CD8-positive, alpha-beta T cell (primary cell): ENCODE measurements at regions of chr6 and their contacts with region 1.

Region 1: DNA sequence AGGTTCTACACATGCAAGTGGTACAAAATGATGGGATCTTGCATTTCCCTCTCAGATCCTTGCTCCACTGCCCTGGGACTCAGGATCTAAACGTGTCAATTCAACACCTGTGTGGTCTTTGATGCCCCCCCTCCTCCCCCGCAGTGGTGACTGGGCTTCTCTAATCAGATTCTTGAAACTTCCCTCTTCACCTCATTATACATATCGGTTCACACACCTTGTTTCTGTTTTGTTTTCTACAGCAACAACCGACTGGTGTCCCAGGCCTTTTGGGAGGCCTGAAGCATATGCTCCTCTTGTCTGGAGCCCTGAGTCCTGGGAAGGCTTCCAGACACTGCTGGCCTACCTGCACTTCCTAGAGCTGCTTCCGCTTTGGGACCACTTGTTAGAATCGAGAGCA is 20.0 kb downstream of the SAMD3 start:
- DNase-seq: peak in 4 of 9 experiments; percentile 30 to 55 (median 31)
- ATAC-seq: peak; percentile 62
- H3K4me3 ChIP-seq: no peak overlapping the region
- H3K4me3 Mint-ChIP-seq: peak overlapping the region; percentile 35
- H3K27ac ChIP-seq: peak overlapping the region; percentile 3 to 50
- H3K27ac Mint-ChIP-seq: peak overlapping the region; percentile 86
- H3K4me1 ChIP-seq: peaks cover 24% of the 10 kb centered on the region
- H3K4me1 Mint-ChIP-seq: peaks cover 74% of the 10 kb centered on the region
- H3K27me3 ChIP-seq: no peaks in the 10 kb centered on the region
- H3K27me3 Mint-ChIP-seq: no peaks in the 10 kb centered on the region
- CTCF ChIP-seq: no peak

Region 2: GRCh38 chr6:129818251-129818650 is 384.5 kb before region 1 on chr6:
- CTCF ChIA-PET with region 1: no interaction called
- POLR2A ChIA-PET with region 1: no interaction called
- intact Hi-C with region 1: no loop called
- DNase-seq: no peak
- ATAC-seq: no peak
- H3K4me3 ChIP-seq: no peak overlapping the region
- H3K4me3 Mint-ChIP-seq: no peak overlapping the region
- H3K27ac ChIP-seq: no peak overlapping the region
- H3K27ac Mint-ChIP-seq: no peak overlapping the region
- H3K4me1 ChIP-seq: no peaks in the 10 kb centered on the region
- H3K4me1 Mint-ChIP-seq: no peaks in the 10 kb centered on the region
- H3K27me3 ChIP-seq: no peaks in the 10 kb centered on the region
- H3K27me3 Mint-ChIP-seq: peaks cover 13% of the 10 kb centered on the region
- CTCF ChIP-seq: no peak

Region 3: DNA sequence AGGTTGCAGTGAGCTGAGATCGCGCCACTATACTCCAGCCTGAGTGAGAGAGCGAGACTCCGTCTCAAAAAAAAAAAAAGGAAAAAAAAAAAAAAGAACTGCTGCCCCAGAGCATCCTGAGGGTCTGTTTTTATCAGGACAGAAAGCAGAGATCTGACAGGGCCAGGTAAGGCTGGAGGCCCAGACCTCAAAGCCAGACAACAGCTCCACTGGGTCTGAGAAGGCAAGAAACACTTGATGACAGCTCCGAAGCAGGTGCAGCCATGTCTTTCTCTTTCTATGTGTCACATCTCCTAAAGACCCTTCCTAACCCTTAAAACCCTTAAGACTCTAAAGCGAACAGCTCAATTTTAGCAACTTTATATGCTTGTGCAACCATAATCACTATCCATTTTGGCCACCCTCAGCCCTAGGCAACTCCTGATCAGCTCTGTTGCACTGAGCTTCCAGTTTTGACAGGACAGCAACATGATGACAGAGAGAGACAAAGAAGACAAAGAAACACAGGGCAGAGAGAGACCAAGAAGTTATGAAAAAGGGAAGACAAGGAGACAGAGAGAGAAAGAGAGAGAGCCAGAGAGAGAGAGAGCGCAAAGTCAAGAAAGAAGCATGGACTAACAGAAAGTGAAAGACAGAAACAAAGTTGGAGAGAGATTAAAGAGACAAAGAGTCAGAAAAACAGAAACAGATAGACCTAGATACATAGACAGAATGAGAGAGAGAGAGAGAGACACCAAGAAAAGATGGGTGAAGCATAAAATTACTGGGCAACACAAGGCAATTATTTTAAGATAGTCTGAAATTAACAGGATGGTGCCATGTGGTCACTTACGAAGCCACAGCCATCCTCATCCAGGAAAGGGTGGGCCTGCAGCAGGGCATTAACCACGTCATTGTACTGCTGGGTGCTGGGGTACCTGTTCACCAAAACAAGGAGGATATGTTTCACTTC is 19.2 kb before region 1 on chr6:
- CTCF ChIA-PET with region 1: interaction called, 3 read pairs
- POLR2A ChIA-PET with region 1: interaction called, 3 read pairs
- intact Hi-C with region 1: loop called in 1 of 2 experiments (anchors 2 kb)
- DNase-seq: peak; percentile 6 to 86 (median 47)
- ATAC-seq: peak; percentile 92
- H3K4me3 ChIP-seq: peak overlapping the region; percentile 17 to 40
- H3K4me3 Mint-ChIP-seq: peak overlapping the region; percentile 59
- H3K27ac ChIP-seq: peak overlapping the region; percentile 67 to 82
- H3K27ac Mint-ChIP-seq: peak overlapping the region; percentile 91
- H3K4me1 ChIP-seq: peaks cover 41% of the 10 kb centered on the region
- H3K4me1 Mint-ChIP-seq: peaks cover 59% of the 10 kb centered on the region
- H3K27me3 ChIP-seq: no peaks in the 10 kb centered on the region
- H3K27me3 Mint-ChIP-seq: no peaks in the 10 kb centered on the region
- CTCF ChIP-seq: no peak

Region 4: DNA sequence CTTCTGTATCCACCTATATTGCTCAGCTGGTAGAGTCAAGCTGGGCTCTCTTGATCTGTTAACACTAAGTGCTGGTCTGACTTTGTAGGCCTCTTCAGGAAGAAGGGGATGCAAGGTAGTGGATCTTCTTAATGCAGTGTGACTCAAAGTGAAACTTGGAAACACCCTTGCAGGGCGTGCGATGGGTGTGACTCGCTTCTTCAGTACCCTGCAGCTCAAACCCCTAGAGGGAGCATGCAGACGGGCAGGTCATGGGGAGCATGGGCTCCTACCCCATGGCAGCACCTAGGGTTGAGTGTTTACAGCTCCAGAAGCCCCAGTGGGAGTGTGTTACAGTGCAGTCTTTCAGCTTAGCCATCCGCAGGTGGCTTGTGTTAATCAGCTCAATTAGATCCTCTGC is 20.7 kb after region 1 on chr6:
- CTCF ChIA-PET with region 1: interaction called, 3 read pairs
- POLR2A ChIA-PET with region 1: interaction called, 5 read pairs
- intact Hi-C with region 1: loop called in 1 of 2 experiments (anchors 2 kb)
- DNase-seq: peak; percentile 28 to 91 (median 66)
- ATAC-seq: peak; percentile 93
- H3K4me3 ChIP-seq: peak overlapping the region; percentile 4 to 53
- H3K4me3 Mint-ChIP-seq: peak overlapping the region; percentile 65
- H3K27ac ChIP-seq: peak overlapping the region; percentile 40 to 78
- H3K27ac Mint-ChIP-seq: peak overlapping the region; percentile 92
- H3K4me1 ChIP-seq: peaks cover 19% of the 10 kb centered on the region
- H3K4me1 Mint-ChIP-seq: peaks cover 40% of the 10 kb centered on the region
- H3K27me3 ChIP-seq: no peaks in the 10 kb centered on the region
- H3K27me3 Mint-ChIP-seq: no peaks in the 10 kb centered on the region
- CTCF ChIP-seq: peak; percentile 53